Spleen (tissue), 13 donors: ENCODE measurements at regions of chr5 and their contacts with region 1.

Region 1: DNA sequence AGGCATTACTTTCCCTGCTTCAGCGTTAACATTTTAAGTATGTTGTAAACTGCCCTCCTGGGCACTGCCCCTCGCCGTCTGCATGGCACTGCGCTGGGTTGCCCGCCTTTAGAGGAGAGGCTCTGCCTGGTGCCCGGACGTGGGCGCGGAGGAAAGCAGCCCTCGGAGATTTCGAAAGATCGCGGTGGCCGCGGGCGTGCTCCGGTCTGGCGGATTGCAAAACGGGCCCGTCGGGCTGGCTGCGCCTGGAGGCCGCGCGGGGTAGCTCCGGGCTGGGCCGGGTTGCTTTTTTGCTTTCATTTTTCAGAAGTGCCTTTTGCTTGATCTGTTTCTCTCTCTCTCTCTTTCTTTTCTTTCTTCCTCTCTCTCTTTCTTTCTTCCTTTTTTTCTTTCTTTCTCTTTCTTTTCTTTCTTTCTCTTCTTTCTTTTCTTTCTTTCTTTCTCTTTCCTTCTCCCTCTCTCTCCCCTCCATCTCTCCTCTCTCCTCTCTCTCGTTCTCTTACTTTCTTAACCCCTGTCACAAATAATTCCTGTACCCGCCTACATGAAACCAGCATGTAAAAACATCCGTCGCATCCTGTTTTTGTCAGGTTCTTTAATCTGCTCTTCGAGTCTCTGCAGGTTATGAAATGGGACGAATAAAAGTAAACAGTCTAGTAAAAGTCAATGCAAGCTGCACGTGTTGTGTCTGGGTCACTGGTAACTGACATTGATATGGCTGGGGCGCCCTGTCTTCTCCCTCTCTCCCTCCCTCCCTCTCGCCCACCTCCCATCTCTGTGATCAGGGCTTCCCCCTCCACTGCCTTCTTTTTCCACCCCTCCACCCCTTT is 1.7 kb downstream of the FST start:
- DNase-seq: peak; percentile 89
- H3K4me3 ChIP-seq: peak overlapping the region; percentile 26 to 72 (median 58)
- H3K27ac ChIP-seq: peak overlapping the region in 1 of 8 donors; percentile 25
- H3K4me1 ChIP-seq: peaks cover 14 to 53% (median 42%) of the 10 kb centered on the region in 6 donors
- H3K27me3 ChIP-seq: peaks cover 0 to 73% (median 30%) of the 10 kb centered on the region in 7 donors
- CTCF ChIP-seq: peak in 7 of 11 experiments; percentile 20 to 56 (median 42)
- POLR2A ChIP-seq: no peak

Region 2: GRCh38 chr5:53249529-53250200 is 232.4 kb before region 1 on chr5:
- intact Hi-C with region 1: no loop called
- DNase-seq: no peak
- H3K4me3 ChIP-seq: no peak overlapping the region
- H3K27ac ChIP-seq: no peak overlapping the region
- H3K4me1 ChIP-seq: no peaks in the 10 kb centered on the region
- H3K27me3 ChIP-seq: no peaks in the 10 kb centered on the region
- CTCF ChIP-seq: no peak
- POLR2A ChIP-seq: no peak

Region 3: DNA sequence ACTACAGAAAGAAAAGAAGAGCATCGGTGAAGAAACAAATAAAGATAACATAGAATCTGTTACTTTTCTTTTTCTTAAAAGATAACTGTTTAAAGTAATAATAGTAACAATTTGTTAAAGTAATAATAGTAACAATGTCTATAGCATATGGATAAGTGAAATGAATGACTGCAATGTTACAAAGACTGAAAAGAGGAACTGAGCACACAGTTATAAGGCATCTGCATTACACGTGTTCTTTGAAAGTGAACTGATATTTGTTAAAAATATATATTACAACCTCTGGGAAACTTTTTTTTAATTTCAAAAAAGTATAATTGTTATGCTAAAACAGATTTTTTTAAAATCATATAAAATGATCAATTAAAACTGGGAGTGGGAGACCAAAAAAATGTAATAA is 90.0 kb before region 1 on chr5:
- intact Hi-C with region 1: no loop called
- DNase-seq: no peak
- H3K4me3 ChIP-seq: no peak overlapping the region
- H3K27ac ChIP-seq: no peak overlapping the region
- H3K4me1 ChIP-seq: no peaks in the 10 kb centered on the region
- H3K27me3 ChIP-seq: no peaks in the 10 kb centered on the region
- CTCF ChIP-seq: no peak
- POLR2A ChIP-seq: no peak

Region 4: DNA sequence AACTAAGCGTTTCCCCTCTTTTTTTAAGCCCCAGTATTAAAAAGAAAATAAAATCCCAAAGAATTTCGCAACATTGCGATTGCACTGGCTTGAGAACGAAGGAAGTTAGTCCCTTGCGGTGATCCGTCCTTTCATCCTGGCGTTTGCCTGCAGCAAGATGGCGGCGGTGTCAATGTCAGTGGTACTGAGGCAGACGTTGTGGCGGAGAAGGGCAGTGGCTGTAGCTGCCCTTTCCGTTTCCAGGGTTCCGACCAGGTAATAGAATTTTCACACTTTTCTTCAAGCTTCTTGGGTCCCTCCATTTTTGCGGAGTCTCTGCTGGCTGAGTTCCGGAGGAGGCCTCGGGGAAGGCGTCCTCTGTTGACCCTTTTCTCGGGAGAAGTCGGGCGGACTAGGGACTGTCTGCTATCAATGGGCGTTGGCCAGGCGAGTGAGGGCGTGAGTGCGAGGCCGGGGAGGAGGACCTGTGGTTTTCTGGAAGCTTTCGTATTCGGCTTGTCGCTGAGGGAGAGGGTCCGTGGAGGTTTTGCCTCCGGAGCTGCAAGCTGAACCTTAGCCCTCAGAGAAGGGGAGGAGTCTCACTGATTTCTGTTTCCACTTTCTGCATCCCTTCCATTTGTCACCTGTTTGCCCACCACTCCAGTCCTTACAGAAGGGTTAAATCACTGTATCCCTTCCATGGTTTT is 78.5 kb after region 1 on chr5 and contains the start of gene NDUFS4:
- intact Hi-C with region 1: no loop called
- DNase-seq: peak; percentile 90
- H3K4me3 ChIP-seq: peak within 1 kb of the TSS; percentile 66 to 95 (median 80)
- H3K27ac ChIP-seq: peak within 1 kb of the TSS; percentile 54 to 88 (median 85)
- H3K4me1 ChIP-seq: peaks cover 17 to 52% (median 35%) of the 10 kb centered on the region in 6 donors
- H3K27me3 ChIP-seq: peaks cover 0 to 10% (median 0%) of the 10 kb centered on the region in 7 donors
- CTCF ChIP-seq: peak in 1 of 11 experiments; percentile 7
- POLR2A ChIP-seq: no peak
- total RNA-seq, gene NDUFS4: 35.4 to 53.4 (median 46.9) TPM

Region 5: DNA sequence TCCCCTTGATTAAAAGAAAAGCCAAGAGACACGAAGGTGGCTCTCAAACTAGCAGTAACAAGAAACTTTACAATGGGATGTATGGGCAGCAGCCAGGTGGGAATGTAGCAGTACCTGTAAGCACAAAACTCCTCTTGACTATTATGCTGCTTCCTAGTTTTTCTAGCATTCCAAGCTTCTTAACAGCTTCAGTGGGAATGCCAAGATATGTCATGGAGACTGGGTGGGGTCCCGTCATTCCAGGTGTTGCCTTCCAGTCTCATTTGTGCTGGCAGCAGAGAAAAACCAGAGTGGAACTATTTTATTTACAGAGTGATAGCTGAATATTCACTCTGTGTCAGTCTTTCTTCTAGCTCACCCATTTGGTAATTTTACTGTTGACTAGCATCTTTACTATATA is 591.6 kb after region 1 on chr5:
- intact Hi-C with region 1: no loop called
- DNase-seq: no peak
- H3K4me3 ChIP-seq: no peak overlapping the region
- H3K27ac ChIP-seq: no peak overlapping the region
- H3K4me1 ChIP-seq: no peaks in the 10 kb centered on the region
- H3K27me3 ChIP-seq: no peaks in the 10 kb centered on the region
- CTCF ChIP-seq: no peak
- POLR2A ChIP-seq: no peak

Region 6: DNA sequence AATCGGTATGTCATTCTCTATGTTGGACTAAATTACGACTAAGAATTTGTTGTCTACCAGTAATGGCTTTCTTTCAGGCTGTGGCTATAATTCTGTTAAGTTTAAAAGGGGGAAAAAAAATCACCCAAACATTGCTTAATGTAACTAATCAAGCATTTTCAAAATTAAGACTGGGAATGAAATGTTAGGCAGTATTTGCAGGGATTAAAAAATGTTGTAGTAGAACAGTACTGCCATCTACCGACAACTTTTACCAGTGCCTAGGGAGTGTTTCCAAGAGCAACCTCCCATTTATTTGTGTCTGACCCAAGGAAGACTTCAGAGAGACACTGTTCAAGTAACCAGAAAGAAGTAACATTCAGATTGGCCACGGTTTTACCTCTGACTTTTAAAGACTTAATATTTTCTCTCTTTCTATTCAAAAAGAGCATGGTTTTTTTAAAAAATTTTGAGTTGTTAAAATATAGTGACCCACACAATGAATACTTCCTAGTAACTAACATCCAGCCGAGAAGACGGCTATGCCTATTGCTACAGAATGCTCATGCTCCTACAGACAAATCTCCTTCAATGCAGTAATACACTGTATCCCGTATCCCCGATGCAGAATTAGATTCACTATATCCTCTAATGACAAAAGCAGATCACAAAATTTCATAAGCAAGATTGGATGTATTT is 735.9 kb after region 1 on chr5:
- intact Hi-C with region 1: loop called (anchors 5 kb)
- DNase-seq: no peak
- H3K4me3 ChIP-seq: no peak overlapping the region
- H3K27ac ChIP-seq: no peak overlapping the region
- H3K4me1 ChIP-seq: no peaks in the 10 kb centered on the region
- H3K27me3 ChIP-seq: no peaks in the 10 kb centered on the region
- CTCF ChIP-seq: peak in 10 of 11 experiments; percentile 30 to 82 (median 68)
- POLR2A ChIP-seq: no peak

Region 7: DNA sequence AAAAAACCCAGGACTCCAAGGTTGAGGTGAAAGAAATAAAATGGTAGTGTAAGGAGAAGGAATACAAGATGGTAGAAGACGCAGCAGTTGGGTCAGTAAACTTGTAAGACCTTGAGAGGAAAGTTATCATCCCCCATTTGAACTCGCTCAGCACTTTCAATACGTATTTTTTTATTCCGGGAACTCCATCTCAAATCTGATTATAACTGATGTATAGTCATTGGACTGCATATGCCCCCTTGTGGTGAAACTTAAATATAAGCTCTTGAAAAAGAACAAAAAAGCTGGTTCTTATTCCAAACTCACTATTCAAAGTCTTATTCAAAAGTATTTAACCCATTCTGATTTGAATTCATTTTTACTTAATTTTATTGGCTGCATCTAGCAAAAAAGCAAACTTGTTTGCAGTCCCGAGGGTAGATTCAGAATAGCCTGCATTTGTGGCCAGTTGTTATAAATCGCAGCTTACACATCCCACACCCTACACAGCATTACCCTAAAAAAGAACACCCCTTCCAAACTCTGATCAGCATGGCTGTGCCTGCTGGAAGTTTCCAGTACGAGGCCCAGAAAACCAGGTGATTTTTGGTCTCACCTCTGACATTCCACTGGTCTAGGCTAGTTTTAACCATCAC is 1385.3 kb after region 1 on chr5:
- intact Hi-C with region 1: loop called (anchors 10 kb)
- DNase-seq: no peak
- H3K4me3 ChIP-seq: peak overlapping the region in 2 of 8 donors; percentile 14 to 53
- H3K27ac ChIP-seq: no peak overlapping the region
- H3K4me1 ChIP-seq: peaks cover 0 to 11% (median 2%) of the 10 kb centered on the region in 6 donors
- H3K27me3 ChIP-seq: peaks cover 0 to 3% (median 0%) of the 10 kb centered on the region in 7 donors
- CTCF ChIP-seq: peak in 10 of 11 experiments; percentile 23 to 74 (median 64)
- POLR2A ChIP-seq: no peak